ENCODE measurements at regions of chr6 and their contacts with region 1.

Region 1: DNA sequence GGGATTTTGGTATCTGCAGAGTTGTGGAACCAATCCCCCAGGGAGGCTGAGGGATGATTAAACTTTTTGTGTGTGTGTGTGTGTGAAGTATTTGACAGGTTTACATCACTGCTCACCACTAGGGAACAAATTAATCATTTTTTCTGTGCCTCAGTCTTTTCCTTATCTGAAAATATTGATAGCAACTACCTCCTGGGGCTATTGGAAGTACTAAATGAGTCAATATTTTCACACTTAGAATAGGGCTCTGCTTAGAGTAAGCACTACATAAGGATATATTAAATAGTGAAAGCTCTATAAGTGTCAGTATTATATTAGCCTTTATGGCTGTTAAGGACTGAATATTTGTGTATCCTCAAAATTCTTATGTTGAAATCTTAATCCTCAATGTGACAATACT is 155.2 kb upstream of the UST start:
- DNase-seq: no peak
- ATAC-seq: no peak
- H3K4me3 ChIP-seq: no peak overlapping the region
- H3K27ac ChIP-seq: no peak overlapping the region
- H3K4me1 ChIP-seq: no peaks in the 10 kb centered on the region
- H3K27me3 ChIP-seq: no peaks in the 10 kb centered on the region
- CTCF ChIP-seq: no peak
- EP300 ChIP-seq: no peak
- POLR2A ChIP-seq: no peak
- RAD21 ChIP-seq: no peak

Region 2: GRCh38 chr6:147941143-147941542 is 650.5 kb before region 1 on chr6:
- CTCF ChIA-PET with region 1: no interaction called
- POLR2A ChIA-PET with region 1: no interaction called
- in situ Hi-C with region 1: no loop called
- intact Hi-C with region 1: no loop called
- DNase-seq: no peak
- ATAC-seq: no peak
- H3K4me3 ChIP-seq: no peak overlapping the region
- H3K27ac ChIP-seq: no peak overlapping the region
- H3K4me1 ChIP-seq: no peaks in the 10 kb centered on the region
- H3K27me3 ChIP-seq: no peaks in the 10 kb centered on the region
- CTCF ChIP-seq: no peak
- EP300 ChIP-seq: no peak
- POLR2A ChIP-seq: no peak
- RAD21 ChIP-seq: no peak

Region 3: GRCh38 chr6:148528292-148528691 is 63.4 kb before region 1 on chr6:
- CTCF ChIA-PET with region 1: no interaction called
- POLR2A ChIA-PET with region 1: no interaction called
- in situ Hi-C with region 1: no loop called
- intact Hi-C with region 1: loop called (anchors 2 kb)
- DNase-seq: no peak
- ATAC-seq: no peak
- H3K4me3 ChIP-seq: no peak overlapping the region
- H3K27ac ChIP-seq: no peak overlapping the region
- H3K4me1 ChIP-seq: no peaks in the 10 kb centered on the region
- H3K27me3 ChIP-seq: no peaks in the 10 kb centered on the region
- CTCF ChIP-seq: no peak
- EP300 ChIP-seq: no peak
- POLR2A ChIP-seq: no peak
- RAD21 ChIP-seq: no peak